Activated CD8-positive, alpha-beta T cell treated with anti-CD3 and anti-CD28 coated beads for 36 hours (primary cell): ENCODE measurements at regions of chr2 and their contacts with region 1.

Region 1: DNA sequence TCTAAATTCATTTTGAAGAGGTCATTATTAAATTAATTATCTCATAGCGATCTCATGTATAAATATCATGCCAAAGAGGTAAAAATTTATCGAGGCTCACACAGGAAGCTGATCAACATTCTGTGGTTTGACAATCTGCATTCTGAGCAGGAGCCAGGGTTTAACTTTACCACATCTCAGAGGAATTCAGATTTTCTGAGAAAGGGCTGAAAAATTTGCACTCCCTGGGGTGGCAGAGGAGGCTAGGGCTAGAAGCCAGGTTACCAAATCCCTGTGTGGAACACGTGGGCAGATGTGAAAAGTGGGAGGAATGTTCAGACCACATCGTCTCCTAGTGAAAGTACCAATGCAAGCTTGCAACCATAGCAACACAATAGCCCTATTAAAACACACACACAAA is 63.5 kb upstream of the CTLA4 start:
- DNase-seq: peak; percentile 72
- ATAC-seq: peak; percentile 47
- H3K4me3 Mint-ChIP-seq: no peak overlapping the region
- H3K27ac Mint-ChIP-seq: peak overlapping the region; percentile 88
- H3K4me1 Mint-ChIP-seq: peaks cover 87% of the 10 kb centered on the region
- H3K27me3 Mint-ChIP-seq: no peaks in the 10 kb centered on the region
- CTCF ChIP-seq: no peak

Region 2: GRCh38 chr2:203782262-203782976 is 21.7 kb before region 1 on chr2:
- CTCF ChIA-PET with region 1: interaction called, 5 read pairs
- POLR2A ChIA-PET with region 1: interaction called, 10 read pairs
- intact Hi-C with region 1: no loop called
- DNase-seq: peak; percentile 83
- ATAC-seq: peak; percentile 96
- H3K4me3 Mint-ChIP-seq: no peak overlapping the region
- H3K27ac Mint-ChIP-seq: peak overlapping the region; percentile 82
- H3K4me1 Mint-ChIP-seq: peaks cover 49% of the 10 kb centered on the region
- H3K27me3 Mint-ChIP-seq: no peaks in the 10 kb centered on the region
- CTCF ChIP-seq: peak; percentile 77

Region 3: GRCh38 chr2:203822240-203822639 is 18.2 kb after region 1 on chr2:
- CTCF ChIA-PET with region 1: no interaction called
- POLR2A ChIA-PET with region 1: no interaction called
- intact Hi-C with region 1: no loop called
- DNase-seq: peak; percentile 44
- ATAC-seq: peak; percentile 34
- H3K4me3 Mint-ChIP-seq: no peak overlapping the region
- H3K27ac Mint-ChIP-seq: no peak overlapping the region
- H3K4me1 Mint-ChIP-seq: peaks cover 30% of the 10 kb centered on the region
- H3K27me3 Mint-ChIP-seq: no peaks in the 10 kb centered on the region
- CTCF ChIP-seq: no peak

Region 4: DNA sequence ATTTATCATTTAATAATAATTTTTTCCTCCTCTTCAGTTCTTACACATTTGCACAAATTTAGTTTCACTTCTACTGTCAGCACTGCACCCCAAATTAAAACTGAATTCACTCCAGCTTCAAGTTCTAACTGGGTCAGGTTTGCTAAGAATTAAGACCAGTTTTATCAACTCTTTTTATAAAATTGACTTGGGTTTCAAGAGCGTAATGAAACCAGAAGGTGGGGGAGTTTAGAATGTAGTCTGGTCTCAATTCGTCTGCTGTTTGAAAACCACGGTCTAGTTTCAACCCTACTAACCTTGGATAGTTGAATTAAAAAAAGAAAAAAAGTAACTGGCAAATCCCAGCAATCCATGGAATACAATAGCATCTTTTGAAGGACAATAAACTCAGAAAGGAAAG is 49.2 kb after region 1 on chr2:
- CTCF ChIA-PET with region 1: no interaction called
- POLR2A ChIA-PET with region 1: no interaction called
- intact Hi-C with region 1: no loop called
- DNase-seq: no peak
- ATAC-seq: peak; percentile 72
- H3K4me3 Mint-ChIP-seq: peak overlapping the region; percentile 55
- H3K27ac Mint-ChIP-seq: peak overlapping the region; percentile 89
- H3K4me1 Mint-ChIP-seq: peaks cover 55% of the 10 kb centered on the region
- H3K27me3 Mint-ChIP-seq: no peaks in the 10 kb centered on the region
- CTCF ChIP-seq: no peak

Region 5: DNA sequence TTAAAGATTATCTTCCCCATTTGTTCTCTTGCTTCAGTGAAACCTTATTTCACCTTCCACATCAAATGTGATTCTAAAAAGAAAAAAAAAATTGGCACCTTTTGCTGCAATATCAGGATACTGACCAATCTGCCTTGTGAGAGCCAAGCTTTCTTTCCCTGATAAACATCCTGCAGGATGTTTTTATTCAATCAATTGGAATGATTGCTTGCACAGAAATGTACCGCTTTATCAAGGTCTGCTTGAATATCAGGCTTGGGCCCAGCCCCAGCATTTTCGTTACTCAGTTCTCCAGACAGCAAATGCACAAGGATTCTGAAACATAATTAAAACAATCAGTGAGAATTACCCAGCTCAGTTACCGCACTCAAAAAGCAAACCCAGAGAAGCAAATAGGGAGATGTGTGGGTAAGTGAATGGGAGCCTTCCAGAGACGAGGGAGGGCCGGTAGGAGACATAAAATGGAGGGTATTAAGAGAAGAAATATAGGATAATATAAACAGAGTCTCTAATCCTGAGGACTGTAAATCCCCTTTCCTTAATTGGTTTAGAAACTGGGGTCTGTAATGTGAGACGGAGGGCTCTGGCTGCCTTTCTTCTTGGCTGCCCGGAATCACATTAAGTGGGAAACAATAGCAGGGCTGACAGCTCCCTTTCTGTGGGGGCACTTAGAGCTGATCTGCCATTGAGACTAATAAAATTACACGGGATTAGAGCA is 424.3 kb after region 1 on chr2:
- CTCF ChIA-PET with region 1: no interaction called
- POLR2A ChIA-PET with region 1: no interaction called
- intact Hi-C with region 1: no loop called
- DNase-seq: no peak
- ATAC-seq: no peak
- H3K4me3 Mint-ChIP-seq: no peak overlapping the region
- H3K27ac Mint-ChIP-seq: no peak overlapping the region
- H3K4me1 Mint-ChIP-seq: no peaks in the 10 kb centered on the region
- H3K27me3 Mint-ChIP-seq: peaks cover 11% of the 10 kb centered on the region
- CTCF ChIP-seq: no peak